ENCODE measurements at regions of chr1 and their contacts with region 1.

Region 1: GRCh38 chr1:66253330-66253921 is 280.5 kb upstream of the SGIP1 start:
- DNase-seq: no peak
- H3K4me3 ChIP-seq: no peak overlapping the region
- H3K27ac ChIP-seq: no peak overlapping the region
- H3K4me1 ChIP-seq: peaks cover 9% of the 10 kb centered on the region
- H3K27me3 ChIP-seq: no peaks in the 10 kb centered on the region
- CTCF ChIP-seq: peak; percentile 40 to 81 (median 58)
- POLR2A ChIP-seq: no peak

Region 2: GRCh38 chr1:66725885-66726665 is 472.6 kb after region 1 on chr1:
- intact Hi-C with region 1: loop called (anchors 10 kb)
- DNase-seq: no peak
- H3K4me3 ChIP-seq: no peak overlapping the region
- H3K27ac ChIP-seq: no peak overlapping the region
- H3K4me1 ChIP-seq: no peaks in the 10 kb centered on the region
- H3K27me3 ChIP-seq: no peaks in the 10 kb centered on the region
- CTCF ChIP-seq: peak; percentile 74 to 85 (median 83)
- POLR2A ChIP-seq: no peak